Prostate gland (tissue), 2 donors: ENCODE measurements at regions of chr11 and their contacts with region 1.

Region 1: DNA sequence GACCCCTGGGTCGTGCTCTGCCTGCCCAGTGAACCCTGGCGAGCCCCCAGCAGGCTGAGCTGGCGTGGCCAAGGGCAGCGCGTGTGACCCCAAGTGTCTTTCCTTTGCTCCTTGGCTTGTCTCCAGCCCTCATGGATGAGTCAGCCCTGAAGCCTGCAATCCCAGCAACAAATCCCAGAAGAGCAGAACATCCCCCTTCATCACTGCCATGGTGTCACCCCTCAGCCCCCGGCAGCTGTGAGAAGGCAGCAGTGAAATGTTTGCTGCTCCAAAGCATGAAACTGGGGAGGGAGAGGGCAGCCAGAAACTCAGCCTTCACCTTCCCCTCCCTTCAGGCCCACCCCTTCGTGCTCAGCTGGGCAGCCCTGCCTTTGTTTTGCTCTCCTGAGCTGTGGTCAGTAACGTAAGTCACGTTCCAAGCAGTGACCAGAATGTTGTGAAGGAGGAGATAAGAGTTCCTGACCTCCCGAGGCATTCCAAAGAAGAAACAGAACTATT is 29.8 kb downstream of the ADAMTS15 start:
- DNase-seq: no peak
- H3K4me3 ChIP-seq: no peak overlapping the region
- H3K27ac ChIP-seq: peak overlapping the region in 1 of 2 donors; percentile 45
- H3K4me1 ChIP-seq: no peaks in the 10 kb centered on the region
- H3K27me3 ChIP-seq: no peaks in the 10 kb centered on the region
- CTCF ChIP-seq: no peak
- POLR2A ChIP-seq: no peak

Region 2: GRCh38 chr11:130390071-130390758 is 88.0 kb before region 1 on chr11:
- intact Hi-C with region 1: no loop called
- DNase-seq: no peak
- H3K4me3 ChIP-seq: no peak overlapping the region
- H3K27ac ChIP-seq: no peak overlapping the region
- H3K4me1 ChIP-seq: no peaks in the 10 kb centered on the region
- H3K27me3 ChIP-seq: no peaks in the 10 kb centered on the region
- CTCF ChIP-seq: peak in 2 of 4 experiments; percentile 18 to 20
- POLR2A ChIP-seq: no peak

Region 3: DNA sequence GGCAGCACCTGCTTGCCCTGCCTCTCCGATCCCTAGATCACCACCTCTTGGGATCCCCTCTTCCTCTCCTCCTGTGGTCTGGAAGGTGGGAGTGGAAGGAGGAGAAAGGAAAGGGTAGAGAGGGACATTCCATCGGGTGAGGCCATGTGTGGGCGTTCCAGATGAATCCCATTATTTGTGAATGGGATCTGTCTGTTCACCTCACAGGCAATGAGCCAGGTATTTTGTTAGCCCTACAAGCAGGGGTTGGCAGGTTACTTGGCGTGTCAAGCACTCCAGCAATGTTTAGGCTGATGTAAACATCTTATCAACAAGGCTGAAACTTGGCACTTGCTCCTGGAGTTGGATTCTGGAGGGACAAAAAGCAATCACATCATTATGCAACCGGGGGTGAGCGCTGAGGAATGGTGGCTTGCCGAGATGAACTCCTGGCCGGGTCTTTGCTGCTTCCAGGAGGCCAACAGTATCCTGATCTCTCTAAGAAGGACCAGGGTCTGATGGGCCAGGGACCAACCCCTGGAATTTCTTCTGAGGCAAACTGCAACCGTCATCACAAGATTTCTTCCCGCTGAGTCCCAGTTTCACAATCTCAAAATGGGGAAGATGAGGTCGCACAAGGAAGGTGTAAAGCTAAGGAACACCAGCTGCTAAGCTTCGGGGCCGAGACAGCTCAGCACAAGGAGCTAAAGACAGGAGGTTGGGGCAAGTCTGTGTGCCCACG is 57.6 kb before region 1 on chr11:
- intact Hi-C with region 1: no loop called
- DNase-seq: no peak
- H3K4me3 ChIP-seq: no peak overlapping the region
- H3K27ac ChIP-seq: peak overlapping the region; percentile 29 to 34
- H3K4me1 ChIP-seq: no peaks in the 10 kb centered on the region
- H3K27me3 ChIP-seq: peaks cover 1% of the 10 kb centered on the region
- CTCF ChIP-seq: no peak
- POLR2A ChIP-seq: no peak

Region 4: DNA sequence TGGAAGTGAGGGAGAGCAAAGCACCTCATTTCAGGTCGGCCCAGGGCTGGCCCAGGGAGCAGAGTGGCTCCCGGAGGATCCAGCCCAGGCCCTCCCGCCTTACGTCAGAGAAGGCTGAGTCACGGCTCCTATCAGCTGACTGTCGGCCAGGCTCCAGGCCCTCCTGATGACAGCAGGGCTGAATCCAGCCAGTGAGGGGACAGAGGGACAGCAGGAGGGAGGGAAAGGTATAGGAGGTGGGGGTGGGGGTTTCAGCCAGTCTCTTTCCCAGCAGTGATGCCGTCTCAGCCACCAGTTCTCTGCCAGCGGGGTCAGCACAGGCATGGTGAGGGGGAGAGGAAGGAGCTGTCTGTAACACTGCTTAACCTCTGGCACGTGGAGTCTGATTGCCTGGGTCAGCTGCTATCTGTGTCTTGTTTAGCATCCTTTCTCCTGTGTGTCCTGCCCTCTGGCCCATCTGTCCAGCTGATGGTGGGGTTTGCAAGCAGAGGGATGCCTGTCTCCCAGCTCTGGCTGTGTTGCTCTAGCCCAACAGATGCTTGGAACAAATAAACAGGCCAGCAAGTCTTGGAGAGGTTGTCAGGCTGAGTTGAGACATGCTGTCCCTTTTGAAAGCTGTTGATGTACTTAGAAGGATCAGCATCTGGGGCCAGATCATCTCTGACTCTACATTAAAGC is 44.2 kb after region 1 on chr11:
- intact Hi-C with region 1: loop called (anchors 5 kb)
- DNase-seq: peak; percentile 33
- H3K4me3 ChIP-seq: no peak overlapping the region
- H3K27ac ChIP-seq: peak overlapping the region; percentile 52 to 62
- H3K4me1 ChIP-seq: no peaks in the 10 kb centered on the region
- H3K27me3 ChIP-seq: no peaks in the 10 kb centered on the region
- CTCF ChIP-seq: no peak
- POLR2A ChIP-seq: no peak

Region 5: DNA sequence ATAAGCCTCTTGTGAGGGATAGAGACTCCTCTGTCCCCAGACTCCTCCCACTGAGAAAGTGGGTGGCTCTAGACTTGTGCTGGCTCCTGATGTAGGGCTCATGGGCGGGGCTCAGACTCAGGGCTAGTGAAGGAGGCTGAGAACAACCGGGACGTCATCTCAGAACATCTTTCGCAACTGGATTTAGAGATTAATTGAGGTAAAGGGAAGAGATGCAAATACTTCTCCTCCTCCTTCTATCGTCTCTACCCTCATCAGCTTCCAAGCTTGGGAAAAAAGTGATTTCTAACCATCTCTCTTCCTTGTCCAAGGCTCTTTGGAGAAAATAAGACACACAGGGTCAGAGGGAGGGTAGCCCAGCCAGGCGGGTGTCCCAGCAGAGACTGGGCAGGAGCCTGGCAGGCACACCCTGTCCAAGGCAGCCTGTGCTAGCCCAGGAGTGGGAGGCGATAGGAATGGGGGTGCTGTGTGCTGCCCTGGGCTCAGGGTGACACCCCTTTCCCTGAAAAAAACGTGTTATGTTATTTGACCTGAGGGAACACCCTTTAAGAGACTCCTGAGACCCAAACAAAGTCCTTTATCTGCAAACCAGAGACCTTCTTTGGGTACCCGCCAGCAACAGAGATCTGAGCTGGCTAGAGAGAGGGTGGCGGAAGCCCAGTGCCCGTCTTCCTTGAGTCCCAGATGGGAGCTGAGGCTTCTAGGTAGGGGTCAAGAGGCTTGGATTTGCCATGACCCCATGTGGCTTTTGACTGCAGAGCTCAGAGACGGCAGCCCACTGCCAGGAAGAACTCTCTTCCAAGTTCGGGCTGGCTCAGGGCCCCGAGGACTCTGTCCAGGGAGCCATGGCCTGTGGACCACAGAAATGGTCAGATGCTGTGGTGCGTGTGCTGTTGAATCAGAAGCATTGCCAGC is 131.1 kb after region 1 on chr11:
- intact Hi-C with region 1: no loop called
- DNase-seq: no peak
- H3K4me3 ChIP-seq: no peak overlapping the region
- H3K27ac ChIP-seq: peak overlapping the region; percentile 13 to 56
- H3K4me1 ChIP-seq: no peaks in the 10 kb centered on the region
- H3K27me3 ChIP-seq: no peaks in the 10 kb centered on the region
- CTCF ChIP-seq: no peak
- POLR2A ChIP-seq: no peak